Transverse colon (tissue), 4 donors: ENCODE measurements at regions of chr1 and their contacts with region 1.

Region 1: GRCh38 chr1:158506369-158506987 is 34.5 kb downstream of the OR10R2 start:
- DNase-seq: peak; percentile 19
- H3K4me3 ChIP-seq: no peak overlapping the region
- H3K27ac ChIP-seq: no peak overlapping the region
- H3K4me1 ChIP-seq: no peaks in the 10 kb centered on the region
- H3K27me3 ChIP-seq: no peaks in the 10 kb centered on the region
- CTCF ChIP-seq: peak in 4 of 5 experiments; percentile 15 to 31 (median 22)
- EP300 ChIP-seq: no peak
- POLR2A ChIP-seq: no peak

Region 2: DNA sequence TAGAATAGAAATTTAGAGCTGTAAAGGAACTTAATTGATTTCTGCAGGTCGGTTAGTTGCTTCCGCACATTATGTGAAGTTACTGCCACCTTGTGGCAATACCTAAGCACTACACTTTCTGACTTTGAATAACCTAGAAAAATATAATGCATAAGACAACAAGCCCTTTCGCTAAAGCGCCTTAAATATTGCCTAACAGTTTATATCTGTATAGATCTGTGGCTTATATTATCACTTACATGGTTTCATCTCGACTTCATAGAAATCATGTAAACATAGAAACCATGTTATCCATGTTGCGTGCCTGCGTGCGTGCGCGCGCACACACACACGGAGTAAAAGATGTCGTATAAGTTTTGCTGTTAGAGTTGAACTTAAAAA is 492.3 kb after region 1 on chr1:
- in situ Hi-C with region 1: loop called in 1 of 4 experiments (anchors 25 kb)
- intact Hi-C with region 1: no loop called
- DNase-seq: peak; percentile 26
- H3K4me3 ChIP-seq: peak overlapping the region in 3 of 4 donors; percentile 26 to 44 (median 27)
- H3K27ac ChIP-seq: peak overlapping the region; percentile 72 to 86 (median 81)
- H3K4me1 ChIP-seq: peaks cover 0 to 31% (median 2%) of the 10 kb centered on the region in 4 donors
- H3K27me3 ChIP-seq: no peaks in the 10 kb centered on the region
- CTCF ChIP-seq: peak; percentile 84 to 93 (median 89)
- EP300 ChIP-seq: no peak
- POLR2A ChIP-seq: no peak

Region 3: GRCh38 chr1:159077120-159077961 is 570.9 kb after region 1 on chr1:
- in situ Hi-C with region 1: loop called in 1 of 4 experiments (anchors 25 kb)
- intact Hi-C with region 1: no loop called
- DNase-seq: peak; percentile 77
- H3K4me3 ChIP-seq: no peak overlapping the region
- H3K27ac ChIP-seq: peak overlapping the region; percentile 57 to 76 (median 66)
- H3K4me1 ChIP-seq: no peaks in the 10 kb centered on the region
- H3K27me3 ChIP-seq: no peaks in the 10 kb centered on the region
- CTCF ChIP-seq: no peak
- EP300 ChIP-seq: no peak
- POLR2A ChIP-seq: no peak